Gastrocnemius medialis (tissue), 4 donors: ENCODE measurements at regions of chr5 and their contacts with region 1.

Region 1: DNA sequence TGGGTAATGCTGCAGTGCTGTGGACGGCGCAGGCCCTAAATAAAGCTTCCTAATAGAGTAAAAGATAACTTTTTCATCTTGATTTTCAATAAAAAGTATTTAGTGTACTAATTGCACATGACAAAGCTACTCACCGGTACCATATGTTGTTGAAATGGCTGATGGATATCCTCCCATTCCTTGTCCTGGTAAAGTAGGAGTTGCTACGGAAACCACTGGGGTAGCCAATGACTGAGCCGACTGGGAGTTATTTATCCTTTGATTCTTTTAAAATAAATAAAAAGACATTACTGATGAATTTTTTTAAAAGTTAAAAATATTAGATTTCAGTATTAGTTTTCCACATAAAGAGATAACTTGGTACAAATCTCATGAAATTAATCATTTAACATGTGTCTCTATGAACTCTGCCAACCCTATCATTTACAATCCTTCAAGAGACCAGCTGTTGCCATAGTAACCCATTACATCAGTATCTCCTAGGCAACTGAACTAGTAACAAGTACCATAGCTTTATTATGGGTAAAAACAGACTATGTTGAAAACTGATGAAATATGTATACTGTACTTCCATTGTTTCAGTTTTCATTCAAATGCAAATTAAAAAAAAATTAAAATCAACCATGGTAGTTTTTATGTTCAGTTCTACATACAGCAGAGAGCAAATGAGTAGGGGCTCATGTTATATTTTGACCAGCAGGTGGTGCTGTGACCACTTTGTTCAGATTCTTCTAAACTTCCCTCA is 153.7 kb downstream of the MEF2C start:
- DNase-seq: peak; percentile 23 to 61
- ATAC-seq: peak; percentile 71 to 77
- H3K4me3 ChIP-seq: no peak overlapping the region
- H3K27ac ChIP-seq: peak overlapping the region in 3 of 4 donors; percentile 62 to 76 (median 67)
- H3K4me1 ChIP-seq: peaks cover 10 to 13% of the 10 kb centered on the region in 2 donors
- H3K27me3 ChIP-seq: no peaks in the 10 kb centered on the region
- CTCF ChIP-seq: peak; percentile 68 to 83 (median 76)
- POLR2A ChIP-seq: no peak

Region 2: GRCh38 chr5:88826646-88827585 is 97.7 kb after region 1 on chr5:
- in situ Hi-C with region 1: no loop called
- intact Hi-C with region 1: no loop called
- DNase-seq: peak in 1 of 2 donors; percentile 46
- ATAC-seq: peak; percentile 43 to 45
- H3K4me3 ChIP-seq: peak overlapping the region; percentile 18 to 32 (median 25)
- H3K27ac ChIP-seq: peak overlapping the region; percentile 84 to 90 (median 87)
- H3K4me1 ChIP-seq: peaks cover 93 to 95% of the 10 kb centered on the region in 2 donors
- H3K27me3 ChIP-seq: no peaks in the 10 kb centered on the region
- CTCF ChIP-seq: no peak
- POLR2A ChIP-seq: peak; percentile 39 to 78

Region 3: GRCh38 chr5:88934439-88934838 is 205.2 kb after region 1 on chr5:
- in situ Hi-C with region 1: loop called in 1 of 4 experiments (anchors 10 kb)
- intact Hi-C with region 1: no loop called
- DNase-seq: no peak
- ATAC-seq: no peak
- H3K4me3 ChIP-seq: no peak overlapping the region
- H3K27ac ChIP-seq: peak overlapping the region in 1 of 4 donors; percentile 42
- H3K4me1 ChIP-seq: peaks cover 25 to 29% of the 10 kb centered on the region in 2 donors
- H3K27me3 ChIP-seq: no peaks in the 10 kb centered on the region
- CTCF ChIP-seq: no peak
- POLR2A ChIP-seq: no peak

Region 4: GRCh38 chr5:89081360-89081759 is 352.1 kb after region 1 on chr5:
- in situ Hi-C with region 1: loop called in 1 of 4 experiments (anchors 25 kb)
- intact Hi-C with region 1: loop called (anchors 10 kb)
- DNase-seq: no peak
- ATAC-seq: no peak
- H3K4me3 ChIP-seq: no peak overlapping the region
- H3K27ac ChIP-seq: no peak overlapping the region
- H3K4me1 ChIP-seq: no peaks in the 10 kb centered on the region
- H3K27me3 ChIP-seq: no peaks in the 10 kb centered on the region
- CTCF ChIP-seq: no peak
- POLR2A ChIP-seq: no peak

Region 5: DNA sequence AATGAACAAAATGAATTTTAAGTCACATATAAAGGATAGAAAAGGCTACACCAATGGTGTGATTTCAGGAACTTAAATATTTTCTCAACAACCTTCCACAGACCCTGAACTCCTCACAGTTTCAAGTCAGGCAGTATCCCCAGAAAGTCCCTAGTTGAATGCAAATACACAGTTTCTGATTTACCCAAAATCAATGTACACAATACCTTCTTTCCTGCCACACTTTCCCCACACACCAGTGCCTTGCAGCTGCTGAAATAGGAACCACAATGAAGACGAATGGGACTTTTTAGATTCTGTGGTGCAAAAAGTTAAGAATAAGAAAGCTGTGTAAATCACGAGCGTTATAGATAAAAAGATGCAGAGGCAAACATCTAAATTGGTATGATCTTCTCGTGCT is 706.1 kb after region 1 on chr5:
- in situ Hi-C with region 1: loop called in 1 of 4 experiments (anchors 25 kb)
- intact Hi-C with region 1: no loop called
- DNase-seq: no peak
- ATAC-seq: no peak
- H3K4me3 ChIP-seq: no peak overlapping the region
- H3K27ac ChIP-seq: no peak overlapping the region
- H3K4me1 ChIP-seq: peaks cover 20 to 33% of the 10 kb centered on the region in 2 donors
- H3K27me3 ChIP-seq: no peaks in the 10 kb centered on the region
- CTCF ChIP-seq: no peak
- POLR2A ChIP-seq: no peak

Region 6: DNA sequence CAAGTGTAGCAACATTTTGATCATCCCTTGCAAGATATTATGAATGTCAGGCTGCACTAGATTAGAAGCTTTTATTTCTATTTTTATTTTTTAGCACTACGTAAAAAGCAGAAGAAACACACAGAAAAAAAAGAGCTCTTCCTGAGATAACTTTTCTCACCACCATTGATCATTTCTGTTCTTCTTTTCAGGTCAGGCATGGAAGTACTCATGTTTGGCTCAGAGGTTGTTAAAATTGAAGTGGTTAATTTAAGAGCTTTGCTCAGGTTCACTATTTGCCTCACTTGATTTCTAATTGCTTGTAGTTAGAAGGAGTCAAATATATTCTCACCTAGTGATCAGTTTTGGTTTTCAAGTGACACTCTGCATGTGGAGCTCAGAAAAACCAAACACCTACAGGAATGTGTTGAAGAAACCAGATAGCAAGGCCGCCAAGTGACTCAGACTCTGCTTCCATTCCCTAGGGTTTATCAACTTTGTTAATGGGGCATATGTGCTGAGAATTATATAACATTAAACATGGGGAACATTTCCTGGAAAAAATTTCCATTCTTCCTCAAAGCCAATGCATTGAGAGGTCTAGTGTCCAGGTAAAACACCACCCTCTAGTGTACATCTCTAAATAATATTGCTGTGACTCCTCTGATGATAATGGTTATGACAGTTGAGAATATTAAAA is 1000.5 kb after region 1 on chr5:
- in situ Hi-C with region 1: loop called in 1 of 4 experiments (anchors 25 kb)
- intact Hi-C with region 1: loop called (anchors 5 kb)
- DNase-seq: no peak
- ATAC-seq: peak in 1 of 2 donors; percentile 32
- H3K4me3 ChIP-seq: no peak overlapping the region
- H3K27ac ChIP-seq: peak overlapping the region in 2 of 4 donors; percentile 36 to 47
- H3K4me1 ChIP-seq: peaks cover 37 to 40% of the 10 kb centered on the region in 2 donors
- H3K27me3 ChIP-seq: no peaks in the 10 kb centered on the region
- CTCF ChIP-seq: no peak
- POLR2A ChIP-seq: no peak

Region 7: GRCh38 chr5:90264689-90265544 is 1535.7 kb after region 1 on chr5:
- in situ Hi-C with region 1: loop called in 3 of 4 experiments (anchors 10 to 25 kb)
- intact Hi-C with region 1: loop called (anchors 2 kb)
- DNase-seq: peak; percentile 15 to 18
- ATAC-seq: no peak
- H3K4me3 ChIP-seq: no peak overlapping the region
- H3K27ac ChIP-seq: no peak overlapping the region
- H3K4me1 ChIP-seq: peaks cover 0 to 4% of the 10 kb centered on the region in 2 donors
- H3K27me3 ChIP-seq: no peaks in the 10 kb centered on the region
- CTCF ChIP-seq: peak; percentile 49 to 89 (median 69)
- POLR2A ChIP-seq: no peak